ENCODE measurements at regions of chr7 and their contacts with region 1.

Region 1: GRCh38 chr7:140175221-140176121 is 1.3 kb downstream of the KDM7A start:
- DNase-seq: peak; percentile 77 to 98 (median 87)
- ATAC-seq: peak; percentile 67
- H3K4me3 ChIP-seq: peak overlapping the region; percentile 60
- H3K4me3 Mint-ChIP-seq: peak overlapping the region; percentile 93
- H3K27ac ChIP-seq: peak overlapping the region; percentile 76 to 94
- H3K27ac Mint-ChIP-seq: peak overlapping the region; percentile 84
- H3K4me1 ChIP-seq: peaks cover 30% of the 10 kb centered on the region
- H3K4me1 Mint-ChIP-seq: peaks cover 46% of the 10 kb centered on the region
- H3K27me3 ChIP-seq: no peaks in the 10 kb centered on the region
- H3K27me3 Mint-ChIP-seq: no peaks in the 10 kb centered on the region
- CTCF ChIP-seq: peak; percentile 84

Region 2: GRCh38 chr7:139359366-139360209 is 815.9 kb before region 1 on chr7 and contains the start of gene LUC7L2:
- CTCF ChIA-PET with region 1: no interaction called
- POLR2A ChIA-PET with region 1: interaction called, 23 read pairs
- intact Hi-C with region 1: loop called in 1 of 2 experiments (anchors 10 kb)
- DNase-seq: peak; percentile 99 to 100 (median 99)
- ATAC-seq: peak; percentile 72
- H3K4me3 ChIP-seq: peak within 1 kb of the TSS; percentile 91
- H3K4me3 Mint-ChIP-seq: peak within 1 kb of the TSS; percentile 99
- H3K27ac ChIP-seq: peak within 1 kb of the TSS; percentile 98 to 99
- H3K27ac Mint-ChIP-seq: peak within 1 kb of the TSS; percentile 98
- H3K4me1 ChIP-seq: peaks cover 25% of the 10 kb centered on the region
- H3K4me1 Mint-ChIP-seq: peaks cover 52% of the 10 kb centered on the region
- H3K27me3 ChIP-seq: no peaks in the 10 kb centered on the region
- H3K27me3 Mint-ChIP-seq: no peaks in the 10 kb centered on the region
- CTCF ChIP-seq: no peak
- total RNA-seq, gene LUC7L2: 177 to 194 TPM

Region 3: GRCh38 chr7:139687980-139688632 is 487.4 kb before region 1 on chr7:
- CTCF ChIA-PET with region 1: no interaction called
- POLR2A ChIA-PET with region 1: no interaction called
- intact Hi-C with region 1: no loop called
- DNase-seq: no peak
- ATAC-seq: no peak
- H3K4me3 ChIP-seq: no peak overlapping the region
- H3K4me3 Mint-ChIP-seq: no peak overlapping the region
- H3K27ac ChIP-seq: no peak overlapping the region
- H3K27ac Mint-ChIP-seq: no peak overlapping the region
- H3K4me1 ChIP-seq: peaks cover 5% of the 10 kb centered on the region
- H3K4me1 Mint-ChIP-seq: peaks cover 22% of the 10 kb centered on the region
- H3K27me3 ChIP-seq: no peaks in the 10 kb centered on the region
- H3K27me3 Mint-ChIP-seq: no peaks in the 10 kb centered on the region
- CTCF ChIP-seq: no peak

Region 4: DNA sequence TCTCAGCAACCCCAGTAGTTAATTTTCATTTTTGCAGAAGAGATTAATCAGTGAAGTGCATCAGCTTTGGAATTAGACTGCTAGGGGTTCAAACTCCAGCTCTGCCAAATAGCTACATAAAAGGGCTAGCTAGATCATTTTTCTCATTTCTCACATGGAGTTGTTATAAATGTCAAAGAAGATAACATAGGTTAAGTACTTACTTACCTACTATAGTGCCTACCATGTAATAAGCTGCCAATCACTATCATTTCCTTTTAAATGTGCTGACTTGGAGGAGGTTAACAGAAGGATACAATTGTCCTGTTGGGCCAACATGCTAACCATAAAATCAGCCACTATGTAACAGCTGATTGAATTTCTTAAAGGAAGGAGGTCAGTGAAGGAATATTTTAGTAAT is 39.4 kb before region 1 on chr7:
- CTCF ChIA-PET with region 1: no interaction called
- POLR2A ChIA-PET with region 1: interaction called, 8 read pairs
- intact Hi-C with region 1: loop called in 1 of 2 experiments (anchors 5 kb)
- DNase-seq: no peak
- ATAC-seq: no peak
- H3K4me3 ChIP-seq: no peak overlapping the region
- H3K4me3 Mint-ChIP-seq: no peak overlapping the region
- H3K27ac ChIP-seq: no peak overlapping the region
- H3K27ac Mint-ChIP-seq: no peak overlapping the region
- H3K4me1 ChIP-seq: no peaks in the 10 kb centered on the region
- H3K4me1 Mint-ChIP-seq: peaks cover 30% of the 10 kb centered on the region
- H3K27me3 ChIP-seq: no peaks in the 10 kb centered on the region
- H3K27me3 Mint-ChIP-seq: no peaks in the 10 kb centered on the region
- CTCF ChIP-seq: no peak

Region 5: DNA sequence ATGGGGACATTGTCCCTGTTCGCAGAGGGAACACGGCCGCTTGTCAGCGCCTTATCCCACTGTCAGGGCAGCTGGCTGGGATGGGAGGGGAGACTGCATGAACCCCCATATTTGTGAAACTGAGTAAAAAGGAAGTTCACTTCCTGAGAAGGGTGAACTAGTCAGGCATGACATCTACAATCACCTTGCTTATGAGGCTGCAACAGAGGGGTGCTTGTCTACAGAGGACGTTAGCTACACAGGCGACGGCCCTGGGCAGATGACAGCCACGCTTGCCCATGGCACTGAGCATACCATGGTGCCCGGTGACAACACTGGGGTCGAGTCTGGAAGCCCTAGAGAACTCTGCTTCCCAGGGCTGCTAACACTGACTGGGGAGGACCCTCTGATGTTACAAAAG is 47.3 kb after region 1 on chr7:
- CTCF ChIA-PET with region 1: no interaction called
- POLR2A ChIA-PET with region 1: interaction called, 394 read pairs
- intact Hi-C with region 1: no loop called
- DNase-seq: no peak
- ATAC-seq: no peak
- H3K4me3 ChIP-seq: no peak overlapping the region
- H3K4me3 Mint-ChIP-seq: peak overlapping the region; percentile 25
- H3K27ac ChIP-seq: no peak overlapping the region
- H3K27ac Mint-ChIP-seq: peak overlapping the region; percentile 78
- H3K4me1 ChIP-seq: peaks cover 44% of the 10 kb centered on the region
- H3K4me1 Mint-ChIP-seq: peaks cover 50% of the 10 kb centered on the region
- H3K27me3 ChIP-seq: no peaks in the 10 kb centered on the region
- H3K27me3 Mint-ChIP-seq: no peaks in the 10 kb centered on the region
- CTCF ChIP-seq: no peak

Region 6: GRCh38 chr7:140260352-140261104 is 85.1 kb after region 1 on chr7:
- CTCF ChIA-PET with region 1: no interaction called
- POLR2A ChIA-PET with region 1: interaction called, 62 read pairs
- intact Hi-C with region 1: loop called in 1 of 2 experiments (anchors 1 kb)
- DNase-seq: no peak
- ATAC-seq: no peak
- H3K4me3 ChIP-seq: no peak overlapping the region
- H3K4me3 Mint-ChIP-seq: no peak overlapping the region
- H3K27ac ChIP-seq: no peak overlapping the region
- H3K27ac Mint-ChIP-seq: peak overlapping the region; percentile 40
- H3K4me1 ChIP-seq: peaks cover 36% of the 10 kb centered on the region
- H3K4me1 Mint-ChIP-seq: peaks cover 45% of the 10 kb centered on the region
- H3K27me3 ChIP-seq: no peaks in the 10 kb centered on the region
- H3K27me3 Mint-ChIP-seq: no peaks in the 10 kb centered on the region
- CTCF ChIP-seq: no peak

Region 7: DNA sequence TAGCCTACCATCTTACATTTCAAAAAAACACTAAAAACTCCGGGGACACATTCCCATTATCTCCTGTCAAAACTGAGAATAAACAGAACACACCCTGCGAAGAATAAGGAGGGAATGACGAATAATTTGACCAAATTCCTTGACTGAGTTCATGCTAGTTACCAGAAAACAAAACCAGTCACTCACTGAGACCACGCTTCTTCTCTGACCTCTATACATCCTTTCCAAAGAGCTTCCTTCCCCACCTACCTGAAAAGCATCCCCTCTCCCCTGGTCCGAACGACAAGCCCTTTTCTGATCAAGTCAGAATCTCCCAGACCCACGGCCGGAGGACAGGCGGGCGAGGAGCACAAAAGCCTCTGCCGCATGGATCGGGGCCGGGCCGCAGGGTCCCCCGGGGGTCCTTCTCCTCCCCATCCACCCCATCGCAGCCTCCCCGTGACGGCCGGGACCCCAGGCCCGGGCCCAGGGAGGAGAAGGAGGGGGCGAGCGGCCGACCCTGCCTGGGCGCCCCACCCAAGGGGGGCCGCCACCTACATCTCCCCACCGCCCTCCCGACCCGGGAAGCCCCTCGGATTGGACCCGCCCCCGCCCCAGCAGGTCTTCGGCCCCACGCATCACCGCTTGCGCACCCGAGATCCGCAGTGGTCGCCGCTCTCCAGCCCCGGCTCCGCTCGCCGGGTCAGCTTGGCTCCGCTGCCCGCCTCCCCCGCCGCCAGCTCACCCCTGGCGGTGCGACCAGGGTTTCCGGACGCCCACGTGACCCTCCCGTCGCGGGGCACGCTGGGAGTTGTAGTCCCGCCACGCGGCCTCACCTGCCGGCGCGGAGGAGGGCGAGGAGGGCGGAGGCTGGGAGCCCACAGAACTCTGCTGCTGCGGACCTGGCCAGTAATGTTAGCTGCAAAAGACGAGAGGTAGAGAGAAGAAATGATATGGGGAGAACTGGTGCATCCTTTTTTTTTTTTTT is 222.6 kb after region 1 on chr7 and contains the start of gene SLC37A3:
- CTCF ChIA-PET with region 1: interaction called, 3 read pairs
- POLR2A ChIA-PET with region 1: interaction called, 7 read pairs
- intact Hi-C with region 1: loop called in 1 of 2 experiments (anchors 10 kb)
- DNase-seq: peak; percentile 75 to 91 (median 84)
- ATAC-seq: peak; percentile 98
- H3K4me3 ChIP-seq: peak within 1 kb of the TSS; percentile 79
- H3K4me3 Mint-ChIP-seq: peak within 1 kb of the TSS; percentile 86
- H3K27ac ChIP-seq: peak within 1 kb of the TSS in 1 of 2 donors; percentile 53
- H3K27ac Mint-ChIP-seq: peak within 1 kb of the TSS; percentile 64
- H3K4me1 ChIP-seq: peaks cover 22% of the 10 kb centered on the region
- H3K4me1 Mint-ChIP-seq: peaks cover 33% of the 10 kb centered on the region
- H3K27me3 ChIP-seq: no peaks in the 10 kb centered on the region
- H3K27me3 Mint-ChIP-seq: no peaks in the 10 kb centered on the region
- CTCF ChIP-seq: no peak
- total RNA-seq, gene SLC37A3: 23.5 to 25.6 TPM

Region 8: GRCh38 chr7:141663081-141663849 is 1487.8 kb after region 1 on chr7:
- CTCF ChIA-PET with region 1: no interaction called
- POLR2A ChIA-PET with region 1: no interaction called
- intact Hi-C with region 1: no loop called
- DNase-seq: no peak
- ATAC-seq: no peak
- H3K4me3 ChIP-seq: no peak overlapping the region
- H3K4me3 Mint-ChIP-seq: no peak overlapping the region
- H3K27ac ChIP-seq: no peak overlapping the region
- H3K27ac Mint-ChIP-seq: peak overlapping the region; percentile 55
- H3K4me1 ChIP-seq: no peaks in the 10 kb centered on the region
- H3K4me1 Mint-ChIP-seq: peaks cover 5% of the 10 kb centered on the region
- H3K27me3 ChIP-seq: no peaks in the 10 kb centered on the region
- H3K27me3 Mint-ChIP-seq: no peaks in the 10 kb centered on the region
- CTCF ChIP-seq: no peak